Calu3 (cell line): ENCODE measurements at regions of chr16 and their contacts with region 1.

Region 1: GRCh38 chr16:57462209-57462977 is at the start of gene POLR2C:
- DNase-seq: peak; percentile 94
- H3K4me3 Mint-ChIP-seq: peak within 1 kb of the TSS; percentile 79
- H3K27ac Mint-ChIP-seq: peak within 1 kb of the TSS; percentile 68
- H3K4me1 Mint-ChIP-seq: peaks cover 15% of the 10 kb centered on the region
- H3K27me3 Mint-ChIP-seq: no peaks in the 10 kb centered on the region
- CTCF ChIP-seq: peak; percentile 93
- total RNA-seq, gene POLR2C: 69.4 and 80.0 TPM in 2 replicates

Region 2: GRCh38 chr16:57091975-57092785 is 370.2 kb before region 1 on chr16 and contains the start of gene CPNE2:
- CTCF ChIA-PET with region 1: interaction called, 11 read pairs
- intact Hi-C with region 1: no loop called
- DNase-seq: peak; percentile 73
- H3K4me3 Mint-ChIP-seq: peak within 1 kb of the TSS; percentile 73
- H3K27ac Mint-ChIP-seq: no peak within 1 kb of the TSS
- H3K4me1 Mint-ChIP-seq: peaks cover 11% of the 10 kb centered on the region
- H3K27me3 Mint-ChIP-seq: peaks cover 46% of the 10 kb centered on the region
- CTCF ChIP-seq: no peak
- total RNA-seq, gene CPNE2: 12.9 and 14.5 TPM in 2 replicates

Region 3: DNA sequence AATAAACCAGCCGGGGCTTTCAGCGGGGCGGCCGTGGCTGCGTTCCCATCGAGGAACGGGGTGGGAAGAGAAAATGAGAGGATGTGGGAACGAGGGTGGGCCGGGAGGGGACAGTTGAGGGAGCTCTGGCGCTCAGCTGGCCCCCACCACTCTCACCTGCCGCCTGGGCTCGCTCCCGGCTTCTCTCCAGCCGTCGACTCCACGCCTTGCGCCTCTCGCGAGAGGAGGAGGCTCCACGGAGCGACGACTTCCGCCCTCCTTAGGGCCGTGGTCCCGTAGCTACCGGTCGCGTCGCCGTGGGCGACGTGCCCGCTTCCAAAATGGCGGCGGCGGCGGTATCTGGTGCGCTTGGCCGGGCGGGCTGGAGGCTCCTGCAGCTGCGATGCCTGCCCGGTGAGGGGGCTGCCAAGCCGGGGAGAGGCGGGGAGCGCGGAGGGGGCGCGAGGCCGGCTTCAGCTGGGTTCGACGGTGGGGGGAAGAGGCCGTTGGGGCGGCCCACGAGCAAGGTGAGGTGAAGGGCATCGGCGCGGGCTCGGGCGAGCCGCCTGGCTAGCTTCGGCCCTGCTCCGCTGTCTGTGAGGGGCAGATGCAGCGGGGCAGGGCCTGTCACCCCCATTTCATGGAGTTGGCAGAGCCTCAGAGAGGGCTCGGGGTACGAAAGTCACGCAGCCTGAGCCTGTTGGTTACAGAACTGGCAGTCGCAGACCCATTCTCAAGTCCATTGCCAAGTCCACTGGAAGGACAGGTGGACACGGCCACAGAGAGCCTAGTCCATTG is 15.0 kb before region 1 on chr16 and contains the starts of genes CIAPIN1 and COQ9:
- CTCF ChIA-PET with region 1: interaction called, 12 read pairs
- intact Hi-C with region 1: no loop called
- DNase-seq: peak; percentile 97
- H3K4me3 Mint-ChIP-seq: peak within 1 kb of the TSS; percentile 91
- H3K27ac Mint-ChIP-seq: peak within 1 kb of the TSS; percentile 88
- H3K4me1 Mint-ChIP-seq: no peaks in the 10 kb centered on the region
- H3K27me3 Mint-ChIP-seq: no peaks in the 10 kb centered on the region
- CTCF ChIP-seq: no peak
- total RNA-seq, gene CIAPIN1: 76.6 and 77.2 TPM in 2 replicates
- total RNA-seq, gene COQ9: 75.9 and 77.7 TPM in 2 replicates

Region 4: DNA sequence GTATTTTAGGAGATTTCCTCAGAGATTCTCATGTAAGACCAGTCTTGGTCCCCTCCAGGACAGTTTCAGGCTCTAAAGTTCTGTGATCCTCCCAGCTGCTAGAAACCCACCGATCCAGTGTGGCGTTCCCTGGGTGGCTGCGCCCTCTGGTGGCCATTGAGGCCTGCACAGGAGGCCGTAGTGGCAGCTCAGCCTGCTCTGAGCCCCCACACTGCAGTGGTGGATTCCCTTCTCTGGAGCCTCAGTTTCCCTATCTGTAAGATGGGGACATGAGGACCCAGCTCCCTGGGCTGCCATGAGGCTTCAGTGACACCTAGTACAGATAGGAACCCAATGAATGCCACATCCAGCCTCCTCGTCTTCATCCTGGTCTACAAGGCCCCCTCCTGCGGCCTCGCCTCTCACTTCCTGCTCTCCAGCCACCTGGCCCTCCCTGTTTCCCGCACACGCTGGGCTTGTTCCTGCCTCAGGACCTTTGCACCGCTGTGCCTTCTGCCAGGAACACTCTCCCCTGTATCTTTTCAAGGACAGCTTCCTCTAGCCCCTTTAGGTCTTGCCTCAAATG is 57.5 kb after region 1 on chr16:
- CTCF ChIA-PET with region 1: interaction called, 10 read pairs
- intact Hi-C with region 1: no loop called
- DNase-seq: peak; percentile 90
- H3K4me3 Mint-ChIP-seq: no peak overlapping the region
- H3K27ac Mint-ChIP-seq: no peak overlapping the region
- H3K4me1 Mint-ChIP-seq: peaks cover 6% of the 10 kb centered on the region
- H3K27me3 Mint-ChIP-seq: no peaks in the 10 kb centered on the region
- CTCF ChIP-seq: peak; percentile 99

Region 5: GRCh38 chr16:57639172-57639887 is 176.9 kb after region 1 on chr16:
- CTCF ChIA-PET with region 1: no interaction called
- intact Hi-C with region 1: no loop called
- DNase-seq: no peak
- H3K4me3 Mint-ChIP-seq: no peak overlapping the region
- H3K27ac Mint-ChIP-seq: no peak overlapping the region
- H3K4me1 Mint-ChIP-seq: peaks cover 36% of the 10 kb centered on the region
- H3K27me3 Mint-ChIP-seq: no peaks in the 10 kb centered on the region
- CTCF ChIP-seq: no peak